ENCODE measurements at regions of chr4 and their contacts with region 1.

Region 1: DNA sequence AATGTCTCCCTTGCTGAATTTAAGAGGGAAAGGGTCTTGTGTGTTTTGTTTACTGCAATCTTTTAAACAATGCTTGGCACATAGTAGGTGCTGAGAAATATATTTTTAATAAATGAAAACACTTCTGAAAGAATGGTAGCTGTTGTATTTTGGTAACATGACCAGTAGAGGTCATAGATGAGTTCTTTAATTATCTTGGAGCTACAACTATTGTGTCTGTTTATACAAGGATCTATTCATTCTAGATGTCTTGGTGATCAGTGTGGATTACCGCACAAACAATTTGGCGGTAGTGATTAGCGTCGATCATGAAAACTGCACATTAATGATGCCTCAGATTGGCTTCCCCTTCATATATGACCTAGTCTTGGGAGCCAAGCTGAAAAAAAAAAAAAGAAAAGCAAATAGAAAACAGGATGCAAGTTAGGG is 21.4 kb upstream of the SCRG1 start:
- DNase-seq: no peak
- H3K4me3 ChIP-seq: no peak overlapping the region
- H3K27ac ChIP-seq: no peak overlapping the region
- H3K4me1 ChIP-seq: no peaks in the 10 kb centered on the region
- H3K27me3 ChIP-seq: no peaks in the 10 kb centered on the region
- CTCF ChIP-seq: peak in 2 of 3 experiments; percentile 21 to 25; a peak in 2 of 4 replicates
- EP300 ChIP-seq: no peak
- POLR2A ChIP-seq: no peak
- RAD21 ChIP-seq: peak; percentile 40 to 51

Region 2: DNA sequence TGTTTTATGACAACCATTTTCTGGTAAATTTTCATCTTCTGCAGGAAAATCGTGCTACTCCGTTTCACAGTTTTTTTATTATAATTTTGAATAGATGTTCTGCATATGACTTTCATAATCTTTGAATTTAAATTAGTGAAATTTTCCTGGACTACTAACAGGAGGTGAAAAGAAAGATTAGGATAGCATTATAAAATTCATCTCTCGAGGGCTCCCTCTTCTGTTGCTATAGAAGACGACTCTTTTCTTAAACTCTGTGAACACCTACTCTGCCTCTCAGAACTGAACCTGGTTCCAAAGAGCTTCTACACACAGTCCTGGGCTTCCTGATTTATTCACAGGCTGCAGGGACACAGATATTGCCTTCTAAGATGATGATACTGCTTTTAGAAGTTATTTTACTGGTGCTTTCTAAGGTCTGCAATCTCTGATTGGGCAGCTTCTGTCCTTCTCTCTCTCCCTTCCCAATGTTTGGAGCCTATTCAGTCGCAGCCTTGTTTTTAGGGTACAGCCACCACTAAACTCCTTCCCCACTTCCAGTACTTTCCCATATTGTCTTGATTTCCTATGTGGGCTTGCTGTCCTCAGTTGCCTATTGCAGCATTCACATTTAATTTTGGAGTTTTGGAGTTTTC is 59.6 kb before region 1 on chr4:
- CTCF ChIA-PET with region 1: interaction called, 18 read pairs
- POLR2A ChIA-PET with region 1: no interaction called
- DNase-seq: no peak
- H3K4me3 ChIP-seq: no peak overlapping the region
- H3K27ac ChIP-seq: no peak overlapping the region
- H3K4me1 ChIP-seq: no peaks in the 10 kb centered on the region
- H3K27me3 ChIP-seq: no peaks in the 10 kb centered on the region
- CTCF ChIP-seq: peak in 2 of 3 experiments; percentile 22 to 34; a peak in 2 of 4 replicates
- EP300 ChIP-seq: no peak
- POLR2A ChIP-seq: no peak
- RAD21 ChIP-seq: peak; percentile 19 to 35; a peak in 3 of 4 replicates

Region 3: GRCh38 chr4:173398779-173399415 is 21.4 kb before region 1 on chr4 and contains the start of gene SCRG1:
- CTCF ChIA-PET with region 1: interaction called, 16 read pairs
- POLR2A ChIA-PET with region 1: no interaction called
- DNase-seq: no peak
- H3K4me3 ChIP-seq: no peak within 1 kb of the TSS
- H3K27ac ChIP-seq: no peak within 1 kb of the TSS
- H3K4me1 ChIP-seq: no peaks in the 10 kb centered on the region
- H3K27me3 ChIP-seq: no peaks in the 10 kb centered on the region
- CTCF ChIP-seq: no peak
- EP300 ChIP-seq: no peak
- POLR2A ChIP-seq: no peak
- RAD21 ChIP-seq: no peak
- total RNA-seq, gene SCRG1: not detected in 2 replicates

Region 4: DNA sequence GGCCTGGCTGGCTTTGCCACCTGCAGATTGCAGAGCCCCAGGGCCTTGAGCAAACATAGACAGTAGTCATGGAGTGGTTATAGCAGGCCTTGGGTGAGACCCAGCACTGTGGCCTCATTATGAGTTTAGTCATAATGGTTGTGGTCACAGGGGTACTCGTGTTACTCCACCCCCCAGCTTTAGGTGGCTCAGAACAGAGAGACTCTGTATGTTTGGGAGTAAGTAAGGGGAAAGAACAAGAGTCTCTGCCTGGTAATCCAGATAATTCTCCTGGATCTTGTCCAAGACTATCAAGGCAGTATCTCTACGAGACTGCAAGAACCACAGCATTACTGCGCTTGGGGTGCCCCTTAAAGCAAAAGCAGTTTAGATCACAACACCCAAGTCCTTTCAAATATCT is 40.8 kb after region 1 on chr4:
- CTCF ChIA-PET with region 1: interaction called, 13 read pairs
- POLR2A ChIA-PET with region 1: no interaction called
- DNase-seq: no peak
- H3K4me3 ChIP-seq: no peak overlapping the region
- H3K27ac ChIP-seq: no peak overlapping the region
- H3K4me1 ChIP-seq: no peaks in the 10 kb centered on the region
- H3K27me3 ChIP-seq: no peaks in the 10 kb centered on the region
- CTCF ChIP-seq: no peak
- EP300 ChIP-seq: no peak
- POLR2A ChIP-seq: no peak
- RAD21 ChIP-seq: no peak

Region 5: GRCh38 chr4:173505924-173506518 is 85.7 kb after region 1 on chr4:
- CTCF ChIA-PET with region 1: interaction called, 18 read pairs
- POLR2A ChIA-PET with region 1: no interaction called
- DNase-seq: peak in 1 of 2 experiments; percentile 85
- H3K4me3 ChIP-seq: peak overlapping the region in 2 of 4 experiments; percentile 19 to 49; a peak in 5 of 8 replicates
- H3K27ac ChIP-seq: no peak overlapping the region
- H3K4me1 ChIP-seq: peaks cover 6 to 27% (median 17%) of the 10 kb centered on the region in 4 experiments
- H3K27me3 ChIP-seq: peaks cover 96 to 100% (median 100%) of the 10 kb centered on the region in 4 experiments
- CTCF ChIP-seq: peak in 2 of 3 experiments; percentile 88 to 91; a peak in 3 of 4 replicates
- EP300 ChIP-seq: no peak
- POLR2A ChIP-seq: no peak
- RAD21 ChIP-seq: peak; percentile 92 to 95

Region 6: DNA sequence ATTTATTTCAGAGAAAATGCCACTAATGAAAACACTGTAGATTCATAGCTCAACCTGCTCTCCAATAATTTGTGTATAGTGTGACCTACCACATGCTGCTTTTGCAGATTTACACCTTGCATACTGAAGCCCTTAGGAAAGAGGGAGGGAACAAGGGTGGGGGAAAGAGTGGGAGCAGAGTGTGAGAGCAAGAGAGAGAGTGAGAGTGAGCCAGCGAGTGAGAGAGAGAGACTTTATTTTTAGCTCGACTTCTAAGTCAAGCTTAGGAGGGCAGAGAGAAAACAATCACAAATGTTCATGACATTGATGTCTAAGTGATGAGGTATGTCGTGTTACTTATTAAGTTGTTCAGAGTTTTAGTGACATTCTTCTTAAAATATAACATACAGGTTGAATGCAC is 222.2 kb after region 1 on chr4:
- CTCF ChIA-PET with region 1: no interaction called
- POLR2A ChIA-PET with region 1: no interaction called
- DNase-seq: no peak
- H3K4me3 ChIP-seq: no peak overlapping the region
- H3K27ac ChIP-seq: no peak overlapping the region
- H3K4me1 ChIP-seq: peaks cover 0 to 3% (median 0%) of the 10 kb centered on the region in 4 experiments; a peak in 2 of 7 replicates
- H3K27me3 ChIP-seq: no peaks in the 10 kb centered on the region
- CTCF ChIP-seq: no peak
- EP300 ChIP-seq: no peak
- POLR2A ChIP-seq: no peak
- RAD21 ChIP-seq: no peak

Measured in H1 (cell line).